Natural killer cell (primary cell): ENCODE measurements at regions of chr1 and their contacts with region 1.

Region 1: GRCh38 chr1:84143796-84144565 is at the start of gene PRKACB:
- DNase-seq: peak in 1 of 2 donors; percentile 78
- ATAC-seq: peak; percentile 86 to 91 (median 91)
- H3K4me3 ChIP-seq: peak within 1 kb of the TSS; percentile 54
- H3K4me3 Mint-ChIP-seq: peak within 1 kb of the TSS; percentile 98
- H3K27ac ChIP-seq: peak within 1 kb of the TSS; percentile 93
- H3K27ac Mint-ChIP-seq: peak within 1 kb of the TSS; percentile 96 to 97
- H3K4me1 ChIP-seq: peaks cover 5% of the 10 kb centered on the region
- H3K4me1 Mint-ChIP-seq: peaks cover 45 to 47% of the 10 kb centered on the region in 2 donors
- H3K27me3 ChIP-seq: no peaks in the 10 kb centered on the region
- H3K27me3 Mint-ChIP-seq: no peaks in the 10 kb centered on the region
- CTCF ChIP-seq: no peak
- total RNA-seq, gene PRKACB: 111 to 148 (median 140) TPM

Region 2: GRCh38 chr1:83905315-83905907 is 238.6 kb before region 1 on chr1:
- intact Hi-C with region 1: no loop called
- DNase-seq: peak in 1 of 2 donors; percentile 61
- ATAC-seq: peak in 2 of 3 donors; percentile 44 to 57
- H3K4me3 ChIP-seq: no peak overlapping the region
- H3K4me3 Mint-ChIP-seq: no peak overlapping the region
- H3K27ac ChIP-seq: no peak overlapping the region
- H3K27ac Mint-ChIP-seq: no peak overlapping the region
- H3K4me1 ChIP-seq: no peaks in the 10 kb centered on the region
- H3K4me1 Mint-ChIP-seq: no peaks in the 10 kb centered on the region
- H3K27me3 ChIP-seq: no peaks in the 10 kb centered on the region
- H3K27me3 Mint-ChIP-seq: peaks cover 4 to 14% of the 10 kb centered on the region in 2 donors
- CTCF ChIP-seq: peak; percentile 83

Region 3: GRCh38 chr1:84069236-84069845 is 74.6 kb before region 1 on chr1:
- intact Hi-C with region 1: no loop called
- DNase-seq: no peak
- ATAC-seq: no peak
- H3K4me3 ChIP-seq: no peak overlapping the region
- H3K4me3 Mint-ChIP-seq: no peak overlapping the region
- H3K27ac ChIP-seq: no peak overlapping the region
- H3K27ac Mint-ChIP-seq: no peak overlapping the region
- H3K4me1 ChIP-seq: no peaks in the 10 kb centered on the region
- H3K4me1 Mint-ChIP-seq: no peaks in the 10 kb centered on the region
- H3K27me3 ChIP-seq: peaks cover 2% of the 10 kb centered on the region
- H3K27me3 Mint-ChIP-seq: peaks cover 7 to 40% of the 10 kb centered on the region in 2 donors
- CTCF ChIP-seq: no peak

Region 4: DNA sequence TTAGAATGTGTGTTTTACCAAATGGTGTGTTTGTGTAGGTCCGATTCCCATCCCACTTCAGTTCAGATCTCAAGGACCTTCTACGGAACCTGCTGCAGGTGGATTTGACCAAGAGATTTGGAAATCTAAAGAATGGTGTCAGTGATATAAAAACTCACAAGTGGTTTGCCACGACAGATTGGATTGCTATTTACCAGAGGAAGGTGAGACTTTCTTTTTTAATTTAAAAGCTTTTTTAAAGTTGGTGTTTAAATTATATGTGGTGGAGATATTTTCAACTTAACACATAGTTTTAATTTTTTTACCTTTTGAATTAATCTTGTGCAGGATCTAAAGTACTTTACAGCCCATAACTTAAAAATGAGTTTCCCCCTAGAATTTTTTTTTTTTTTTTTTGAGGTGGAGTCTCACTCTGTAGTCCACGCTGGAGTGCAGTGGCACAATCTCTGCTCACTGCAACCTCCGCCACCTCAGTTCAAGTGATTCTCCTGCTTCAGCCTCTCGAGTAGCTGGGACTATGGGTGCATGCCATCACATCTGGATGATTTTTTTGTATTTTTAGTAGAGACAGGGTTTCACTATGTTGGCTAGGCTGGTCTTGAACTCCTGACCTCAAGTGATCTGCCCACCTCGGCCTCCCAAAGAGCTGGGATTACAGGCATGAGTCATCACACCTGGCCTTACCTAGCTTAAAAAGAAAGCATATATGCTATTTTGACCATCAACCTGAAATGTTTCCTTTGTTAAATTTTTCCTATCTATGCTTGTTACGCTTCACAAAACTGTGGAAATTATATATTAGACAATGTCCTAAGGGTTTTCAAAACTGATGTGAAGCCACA is 70.4 kb after region 1 on chr1:
- intact Hi-C with region 1: loop called (anchors 10 kb)
- DNase-seq: peak in 1 of 2 donors; percentile 6
- ATAC-seq: peak; percentile 66 to 75 (median 67)
- H3K4me3 ChIP-seq: no peak overlapping the region
- H3K4me3 Mint-ChIP-seq: peak overlapping the region; percentile 57
- H3K27ac ChIP-seq: peak overlapping the region; percentile 38
- H3K27ac Mint-ChIP-seq: peak overlapping the region; percentile 76 to 82
- H3K4me1 ChIP-seq: peaks cover 9% of the 10 kb centered on the region
- H3K4me1 Mint-ChIP-seq: peaks cover 40% of the 10 kb centered on the region in 2 donors
- H3K27me3 ChIP-seq: no peaks in the 10 kb centered on the region
- H3K27me3 Mint-ChIP-seq: no peaks in the 10 kb centered on the region
- CTCF ChIP-seq: no peak

Region 5: DNA sequence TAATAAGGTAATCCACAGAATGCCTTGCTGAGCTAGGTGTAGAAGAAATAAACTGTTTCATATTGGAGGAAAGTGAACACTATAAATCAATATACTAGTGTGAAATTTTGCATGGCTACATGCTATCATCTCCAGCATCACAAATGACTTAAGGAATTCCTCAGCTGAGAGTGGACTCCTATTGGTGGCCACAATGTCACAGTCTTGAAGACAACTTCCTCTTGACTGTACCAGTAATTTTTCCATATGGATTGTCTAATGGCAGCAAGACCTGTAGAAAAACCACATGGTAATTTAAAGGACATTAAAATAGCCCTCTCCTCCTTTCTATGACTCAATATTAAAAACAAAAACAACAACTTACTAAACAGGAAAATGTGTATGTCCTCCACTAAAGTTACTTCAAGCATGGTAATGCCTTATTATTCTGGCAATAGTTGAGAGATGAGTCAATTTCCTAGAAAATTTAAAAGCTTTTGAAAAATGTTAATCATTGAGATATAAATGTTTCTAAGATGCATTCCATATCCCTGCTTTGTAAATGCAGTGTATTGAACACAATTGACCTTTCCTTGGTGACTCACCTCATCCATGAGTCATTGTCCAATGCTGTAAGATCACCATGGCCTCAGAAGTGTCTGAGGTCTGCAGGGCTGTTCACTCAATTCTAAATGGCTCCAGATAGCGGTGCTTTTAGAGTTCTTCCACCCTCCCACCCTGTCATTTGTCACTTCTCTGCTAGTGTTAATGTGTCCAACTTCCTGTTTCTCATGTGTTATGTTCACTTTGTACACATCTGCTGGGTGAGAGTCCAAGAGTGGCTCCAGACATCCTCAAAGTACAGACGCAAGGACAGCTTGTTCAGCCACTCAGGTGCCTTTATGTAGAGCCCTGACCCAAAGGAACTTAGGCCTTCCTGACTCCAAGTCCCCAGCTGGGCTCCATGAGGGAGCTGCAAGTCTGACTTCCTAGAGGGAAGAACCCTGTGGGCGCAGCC is 221.5 kb after region 1 on chr1:
- intact Hi-C with region 1: loop called (anchors 2 kb)
- DNase-seq: peak; percentile 13 to 27
- ATAC-seq: peak; percentile 92 to 96 (median 92)
- H3K4me3 ChIP-seq: no peak overlapping the region
- H3K4me3 Mint-ChIP-seq: peak overlapping the region; percentile 57
- H3K27ac ChIP-seq: peak overlapping the region; percentile 59
- H3K27ac Mint-ChIP-seq: peak overlapping the region; percentile 70 to 85
- H3K4me1 ChIP-seq: peaks cover 6% of the 10 kb centered on the region
- H3K4me1 Mint-ChIP-seq: peaks cover 37 to 47% of the 10 kb centered on the region in 2 donors
- H3K27me3 ChIP-seq: no peaks in the 10 kb centered on the region
- H3K27me3 Mint-ChIP-seq: peaks cover 0 to 2% of the 10 kb centered on the region in 2 donors
- CTCF ChIP-seq: no peak

Region 6: GRCh38 chr1:84506002-84506728 is 362.2 kb after region 1 on chr1 and contains the starts of genes GNG5 and SPATA1:
- intact Hi-C with region 1: loop called (anchors 10 kb)
- DNase-seq: peak; percentile 95 to 99
- ATAC-seq: peak; percentile 83 to 95 (median 88)
- H3K4me3 ChIP-seq: peak within 1 kb of the TSS; percentile 92
- H3K4me3 Mint-ChIP-seq: peak within 1 kb of the TSS; percentile 97
- H3K27ac ChIP-seq: peak within 1 kb of the TSS; percentile 98
- H3K27ac Mint-ChIP-seq: peak within 1 kb of the TSS; percentile 91 to 93
- H3K4me1 ChIP-seq: peaks cover 5% of the 10 kb centered on the region
- H3K4me1 Mint-ChIP-seq: peaks cover 34 to 49% of the 10 kb centered on the region in 2 donors
- H3K27me3 ChIP-seq: no peaks in the 10 kb centered on the region
- H3K27me3 Mint-ChIP-seq: no peaks in the 10 kb centered on the region
- CTCF ChIP-seq: no peak
- total RNA-seq, gene GNG5: 49.5 to 62.3 (median 57.5) TPM
- total RNA-seq, gene SPATA1: 0.63 to 4.1 (median 2.1) TPM

Region 7: GRCh38 chr1:84620720-84621313 is 476.8 kb after region 1 on chr1:
- intact Hi-C with region 1: loop called (anchors 1 kb)
- DNase-seq: peak; percentile 86
- ATAC-seq: peak; percentile 95
- H3K4me3 ChIP-seq: peak overlapping the region; percentile 64
- H3K4me3 Mint-ChIP-seq: peak overlapping the region; percentile 88
- H3K27ac ChIP-seq: no peak overlapping the region
- H3K27ac Mint-ChIP-seq: peak overlapping the region in 1 of 2 donors; percentile 53
- H3K4me1 ChIP-seq: peaks cover 7% of the 10 kb centered on the region
- H3K4me1 Mint-ChIP-seq: peaks cover 0 to 6% of the 10 kb centered on the region in 2 donors
- H3K27me3 ChIP-seq: no peaks in the 10 kb centered on the region
- H3K27me3 Mint-ChIP-seq: peaks cover 0 to 3% of the 10 kb centered on the region in 2 donors
- CTCF ChIP-seq: peak; percentile 100

Region 8: GRCh38 chr1:84753516-84754385 is 609.8 kb after region 1 on chr1:
- intact Hi-C with region 1: loop called (anchors 5 kb)
- DNase-seq: peak; percentile 69 to 87
- ATAC-seq: peak; percentile 83 to 97 (median 96)
- H3K4me3 ChIP-seq: no peak overlapping the region
- H3K4me3 Mint-ChIP-seq: no peak overlapping the region
- H3K27ac ChIP-seq: no peak overlapping the region
- H3K27ac Mint-ChIP-seq: no peak overlapping the region
- H3K4me1 ChIP-seq: no peaks in the 10 kb centered on the region
- H3K4me1 Mint-ChIP-seq: peaks cover 4 to 5% of the 10 kb centered on the region in 2 donors
- H3K27me3 ChIP-seq: peaks cover 6% of the 10 kb centered on the region
- H3K27me3 Mint-ChIP-seq: peaks cover 10 to 37% of the 10 kb centered on the region in 2 donors
- CTCF ChIP-seq: peak; percentile 92

Region 9: DNA sequence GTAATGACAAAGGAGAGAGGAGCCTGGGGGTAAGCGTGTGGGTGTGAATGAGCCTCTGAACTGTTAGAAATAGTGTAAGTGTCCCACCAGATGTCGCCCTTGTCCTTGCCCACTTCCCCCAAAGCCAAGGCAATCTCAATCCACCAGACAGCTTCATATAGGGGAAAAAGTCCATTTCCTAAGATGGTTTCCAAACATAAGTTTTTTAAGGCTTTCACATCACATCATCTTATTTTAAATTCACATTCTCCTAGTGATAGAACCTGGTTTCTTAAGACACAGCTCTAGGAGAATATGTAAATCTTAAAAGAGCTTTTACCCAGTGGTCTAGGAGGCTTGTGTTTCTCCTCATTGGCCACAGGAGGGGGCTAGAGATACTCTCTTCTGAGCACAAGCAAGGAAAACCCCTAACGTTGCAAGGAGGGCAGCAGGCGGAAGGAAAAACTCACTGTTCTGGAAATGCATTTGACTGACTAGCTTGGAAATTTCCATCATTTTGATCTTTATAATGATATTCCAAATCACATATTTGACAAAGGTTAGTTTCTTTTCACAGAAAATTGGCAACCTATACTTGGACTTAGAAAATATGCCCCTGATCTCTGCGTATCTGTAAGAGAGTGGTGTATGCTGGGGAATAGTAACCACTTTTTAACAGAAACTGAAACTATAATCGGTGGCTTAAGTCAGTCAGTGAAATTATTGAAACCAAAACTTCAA is 800.9 kb after region 1 on chr1:
- intact Hi-C with region 1: loop called (anchors 2 kb)
- DNase-seq: peak; percentile 59 to 97
- ATAC-seq: peak; percentile 93 to 98 (median 93)
- H3K4me3 ChIP-seq: peak overlapping the region; percentile 47
- H3K4me3 Mint-ChIP-seq: peak overlapping the region; percentile 88
- H3K27ac ChIP-seq: peak overlapping the region; percentile 82
- H3K27ac Mint-ChIP-seq: peak overlapping the region; percentile 96 to 99
- H3K4me1 ChIP-seq: peaks cover 9% of the 10 kb centered on the region
- H3K4me1 Mint-ChIP-seq: peaks cover 12 to 18% of the 10 kb centered on the region in 2 donors
- H3K27me3 ChIP-seq: no peaks in the 10 kb centered on the region
- H3K27me3 Mint-ChIP-seq: peaks cover 3 to 8% of the 10 kb centered on the region in 2 donors
- CTCF ChIP-seq: peak; percentile 99